Mucosa of descending colon (tissue), 3 donors: ENCODE measurements at regions of chr2 and their contacts with region 1.

Region 1: GRCh38 chr2:219160186-219161017 is at the start of gene NHEJ1:
- DNase-seq: peak; percentile 98 to 100 (median 99)
- ATAC-seq: peak; percentile 96
- H3K4me3 ChIP-seq: peak within 1 kb of the TSS; percentile 31
- H3K4me1 ChIP-seq: peaks cover 5% of the 10 kb centered on the region
- CTCF ChIP-seq: peak; percentile 98
- total RNA-seq, gene NHEJ1: 31.9 to 63.6 (median 41.7) TPM

Region 2: GRCh38 chr2:218892693-218893348 is 267.6 kb before region 1 on chr2:
- intact Hi-C with region 1: no loop called
- DNase-seq: peak; percentile 81 to 93 (median 87)
- ATAC-seq: peak; percentile 91
- H3K4me3 ChIP-seq: no peak overlapping the region
- H3K4me1 ChIP-seq: peaks cover 21% of the 10 kb centered on the region
- CTCF ChIP-seq: peak; percentile 54

Region 3: DNA sequence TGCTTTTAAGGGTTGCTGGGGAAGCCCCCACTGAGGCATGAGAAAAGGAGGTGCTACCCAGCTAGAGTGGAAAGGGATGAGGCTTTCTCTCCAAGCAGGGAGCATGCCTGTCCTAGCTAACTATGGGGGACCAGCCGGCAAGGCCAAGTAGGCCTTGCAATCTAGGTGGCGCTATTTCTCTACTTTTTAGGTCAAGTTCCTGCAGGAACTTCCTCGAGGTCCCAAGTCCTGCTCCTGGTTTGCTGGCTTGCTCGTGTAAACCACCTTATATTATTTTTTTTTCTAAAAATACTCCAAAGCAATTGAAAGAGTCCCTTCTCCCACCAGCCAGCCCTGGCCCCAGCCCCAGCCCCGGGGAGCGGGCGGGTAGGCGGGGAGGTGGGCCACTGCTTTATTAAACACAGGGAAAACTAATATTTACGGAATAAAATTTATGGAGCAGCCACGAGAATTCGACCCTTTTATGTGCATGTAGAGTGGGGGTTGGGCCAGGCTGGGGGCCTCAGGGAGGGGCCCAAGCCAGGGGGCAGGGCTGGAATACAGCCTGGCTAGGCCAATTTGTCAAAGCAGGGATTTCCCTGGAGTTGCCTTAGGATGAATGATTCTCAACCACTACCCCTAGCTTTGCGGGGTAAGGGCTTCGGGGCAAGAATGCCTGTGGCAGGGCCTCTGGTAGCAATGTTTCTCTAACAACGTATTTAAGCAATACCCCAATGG is 86.8 kb before region 1 on chr2:
- intact Hi-C with region 1: no loop called
- DNase-seq: peak in 1 of 3 donors; percentile 90
- ATAC-seq: peak; percentile 78
- H3K4me3 ChIP-seq: no peak overlapping the region
- H3K4me1 ChIP-seq: peaks cover 39% of the 10 kb centered on the region
- CTCF ChIP-seq: peak; percentile 47

Region 4: GRCh38 chr2:219218732-219219701 is 58.6 kb after region 1 on chr2 and contains the start of gene ABCB6:
- intact Hi-C with region 1: loop called in 1 of 2 experiments (anchors 10 kb)
- DNase-seq: peak; percentile 94 to 95 (median 95)
- ATAC-seq: peak; percentile 87
- H3K4me3 ChIP-seq: peak within 1 kb of the TSS; percentile 17
- H3K4me1 ChIP-seq: peaks cover 26% of the 10 kb centered on the region
- CTCF ChIP-seq: no peak
- total RNA-seq, gene ABCB6: 6.7 to 21.3 (median 10.4) TPM

Region 5: GRCh38 chr2:219294356-219295351 is 134.3 kb after region 1 on chr2:
- intact Hi-C with region 1: loop called in 1 of 2 experiments (anchors 5 kb)
- DNase-seq: peak; percentile 91 to 94 (median 92)
- ATAC-seq: peak; percentile 98
- H3K4me3 ChIP-seq: no peak overlapping the region
- H3K4me1 ChIP-seq: peaks cover 12% of the 10 kb centered on the region
- CTCF ChIP-seq: peak; percentile 100

Region 6: GRCh38 chr2:219308142-219309093 is 148.0 kb after region 1 on chr2:
- intact Hi-C with region 1: loop called in 1 of 2 experiments (anchors 10 kb)
- DNase-seq: peak in 2 of 3 donors; percentile 76 to 78
- ATAC-seq: peak; percentile 71
- H3K4me3 ChIP-seq: no peak overlapping the region
- H3K4me1 ChIP-seq: no peaks in the 10 kb centered on the region
- CTCF ChIP-seq: no peak

Region 7: GRCh38 chr2:219475697-219476651 is 315.6 kb after region 1 on chr2:
- intact Hi-C with region 1: no loop called
- DNase-seq: peak; percentile 60 to 88 (median 85)
- ATAC-seq: peak; percentile 86
- H3K4me3 ChIP-seq: no peak overlapping the region
- H3K4me1 ChIP-seq: no peaks in the 10 kb centered on the region
- CTCF ChIP-seq: peak; percentile 84